ENCODE measurements at regions of chr1 and their contacts with region 1.

Region 1: GRCh38 chr1:152110860-152111514 is 4.3 kb downstream of the TCHH start:
- DNase-seq: peak; percentile 58
- H3K4me3 ChIP-seq: peak overlapping the region; percentile 19 to 35 (median 33)
- H3K27ac ChIP-seq: no peak overlapping the region
- H3K4me1 ChIP-seq: peaks cover 33% of the 10 kb centered on the region
- H3K27me3 ChIP-seq: peaks cover 75 to 93% of the 10 kb centered on the region in 2 experiments
- CTCF ChIP-seq: no peak
- POLR2A ChIP-seq: no peak

Region 2: GRCh38 chr1:151968058-151968457 is 142.9 kb before region 1 on chr1:
- CTCF ChIA-PET with region 1: no interaction called
- POLR2A ChIA-PET with region 1: no interaction called
- dilution Hi-C with region 1: no loop called
- intact Hi-C with region 1: no loop called
- DNase-seq: peak; percentile 56
- H3K4me3 ChIP-seq: no peak overlapping the region
- H3K27ac ChIP-seq: no peak overlapping the region
- H3K4me1 ChIP-seq: peaks cover 21% of the 10 kb centered on the region
- H3K27me3 ChIP-seq: no peaks in the 10 kb centered on the region
- CTCF ChIP-seq: peak; percentile 55 to 60
- POLR2A ChIP-seq: no peak

Region 3: GRCh38 chr1:152047730-152048402 is 63.1 kb before region 1 on chr1:
- CTCF ChIA-PET with region 1: interaction called, 8 read pairs
- POLR2A ChIA-PET with region 1: no interaction called
- dilution Hi-C with region 1: no loop called
- intact Hi-C with region 1: loop called (anchors 5 kb)
- DNase-seq: peak; percentile 91
- H3K4me3 ChIP-seq: no peak overlapping the region
- H3K27ac ChIP-seq: peak overlapping the region; percentile 25
- H3K4me1 ChIP-seq: peaks cover 18% of the 10 kb centered on the region
- H3K27me3 ChIP-seq: peaks cover 7 to 27% of the 10 kb centered on the region in 2 experiments
- CTCF ChIP-seq: peak; percentile 61 to 80
- POLR2A ChIP-seq: no peak

Region 4: GRCh38 chr1:152162806-152163463 is 51.9 kb after region 1 on chr1:
- CTCF ChIA-PET with region 1: no interaction called
- POLR2A ChIA-PET with region 1: no interaction called
- dilution Hi-C with region 1: no loop called
- intact Hi-C with region 1: no loop called
- DNase-seq: no peak
- H3K4me3 ChIP-seq: no peak overlapping the region
- H3K27ac ChIP-seq: no peak overlapping the region
- H3K4me1 ChIP-seq: no peaks in the 10 kb centered on the region
- H3K27me3 ChIP-seq: peaks cover 0 to 4% of the 10 kb centered on the region in 2 experiments
- CTCF ChIP-seq: no peak
- POLR2A ChIP-seq: no peak